ENCODE measurements at regions of chr15 and their contacts with region 1.

Region 1: DNA sequence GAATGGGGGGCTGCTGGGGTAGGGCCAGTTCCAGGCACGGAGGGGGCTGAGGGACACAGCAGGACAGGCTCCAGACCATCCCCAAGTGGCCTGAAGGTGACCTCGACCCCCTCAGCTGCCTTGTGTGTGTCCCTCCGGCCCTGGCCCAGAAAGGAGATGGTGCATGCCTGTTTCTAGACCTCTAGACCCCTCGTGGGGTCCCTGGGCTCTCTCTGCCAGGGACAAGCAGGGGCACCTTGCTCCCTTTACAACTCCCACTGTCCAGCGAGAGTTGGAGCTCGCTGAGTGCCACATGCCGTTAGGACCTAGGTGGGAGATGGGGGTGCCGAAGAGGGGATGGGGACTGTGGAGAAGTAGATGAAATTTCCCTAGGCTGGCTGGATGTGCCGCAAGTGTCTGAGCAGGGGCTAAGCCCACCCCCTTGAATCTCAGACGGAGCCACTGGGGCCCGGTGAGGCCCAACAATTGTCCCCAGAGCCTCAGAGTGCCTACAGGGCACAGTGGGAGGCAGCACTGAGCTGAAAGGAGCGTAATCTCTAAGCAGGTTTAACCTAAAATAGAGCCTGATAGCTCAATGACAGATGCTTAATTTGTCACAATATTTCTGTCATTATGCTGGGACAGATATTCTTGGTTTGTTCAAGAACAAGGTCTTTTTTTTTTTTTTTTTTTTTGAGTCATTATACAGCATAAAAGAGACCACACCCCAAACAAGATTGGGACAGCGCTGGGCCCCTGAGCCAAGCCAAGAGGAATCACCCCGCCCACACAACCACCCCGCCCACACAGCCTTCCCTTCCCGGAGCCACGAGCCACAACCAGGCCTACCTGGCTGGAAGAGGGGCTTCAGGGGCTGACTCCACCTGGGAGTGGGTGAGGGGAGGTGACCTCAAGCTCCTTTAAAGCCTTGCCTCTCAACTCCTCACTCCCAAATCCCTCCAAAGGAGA is 23.6 kb upstream of the KLF13 start:
- DNase-seq: peak; percentile 67
- ATAC-seq: no peak

Region 2: GRCh38 chr15:31974855-31975829 is 672.1 kb after region 1 on chr15:
- intact Hi-C with region 1: loop called (anchors 5 kb)
- DNase-seq: no peak
- ATAC-seq: no peak